ENCODE measurements at regions of chr12 and their contacts with region 1.

Region 1: DNA sequence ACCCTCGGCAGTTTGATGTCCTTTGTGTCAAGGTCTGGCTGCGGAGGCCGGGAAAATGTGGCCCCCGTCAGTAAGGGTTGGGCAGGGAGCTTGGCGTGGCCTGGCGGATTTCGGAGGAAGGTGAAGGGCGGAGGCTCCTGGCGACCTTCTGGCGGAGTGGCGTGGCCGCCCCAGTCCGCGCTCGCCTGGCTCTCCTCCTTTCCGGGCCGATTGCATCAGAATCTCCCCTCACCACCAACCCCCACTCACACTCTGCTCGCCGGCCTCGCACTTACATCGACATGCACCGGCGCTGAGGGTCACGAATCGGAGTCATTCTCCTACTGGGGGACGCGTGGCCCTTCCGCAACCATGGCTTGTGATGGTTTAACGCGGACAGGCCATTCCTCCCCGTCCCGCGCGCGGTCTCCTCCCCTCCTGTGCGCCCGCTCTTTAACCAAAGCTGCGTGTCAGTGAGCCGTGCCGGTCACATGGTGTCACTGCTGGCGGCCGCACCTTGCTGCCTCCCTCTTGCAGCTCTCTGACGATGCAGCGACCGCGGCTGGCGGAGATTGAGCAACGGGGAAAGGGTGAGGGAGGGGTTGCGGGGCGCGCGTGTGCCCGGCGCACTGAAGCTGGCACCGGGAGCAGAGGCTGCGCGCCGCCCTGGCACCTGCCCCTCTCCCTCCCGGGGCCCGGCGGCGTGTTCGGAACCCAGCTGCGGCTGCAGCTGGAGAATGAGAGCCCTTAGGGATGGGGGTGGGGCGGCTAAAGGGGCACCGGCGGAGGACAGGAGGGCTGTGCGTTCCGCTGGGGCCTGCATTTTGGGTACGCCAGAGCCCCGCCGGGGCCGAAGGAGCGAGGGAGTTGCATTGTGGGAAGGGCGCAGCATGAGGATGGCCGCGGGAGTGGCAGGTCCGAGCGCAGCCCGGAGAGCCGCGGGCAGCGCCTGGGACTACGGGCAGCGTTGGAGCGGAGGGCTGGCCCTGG is at the start of gene SLC38A1:
- DNase-seq: peak; percentile 95
- H3K4me3 Mint-ChIP-seq: no peak within 1 kb of the TSS
- H3K27ac Mint-ChIP-seq: no peak within 1 kb of the TSS
- H3K4me1 Mint-ChIP-seq: peaks cover 34% of the 10 kb centered on the region
- H3K27me3 Mint-ChIP-seq: peaks cover 6% of the 10 kb centered on the region

Region 2: DNA sequence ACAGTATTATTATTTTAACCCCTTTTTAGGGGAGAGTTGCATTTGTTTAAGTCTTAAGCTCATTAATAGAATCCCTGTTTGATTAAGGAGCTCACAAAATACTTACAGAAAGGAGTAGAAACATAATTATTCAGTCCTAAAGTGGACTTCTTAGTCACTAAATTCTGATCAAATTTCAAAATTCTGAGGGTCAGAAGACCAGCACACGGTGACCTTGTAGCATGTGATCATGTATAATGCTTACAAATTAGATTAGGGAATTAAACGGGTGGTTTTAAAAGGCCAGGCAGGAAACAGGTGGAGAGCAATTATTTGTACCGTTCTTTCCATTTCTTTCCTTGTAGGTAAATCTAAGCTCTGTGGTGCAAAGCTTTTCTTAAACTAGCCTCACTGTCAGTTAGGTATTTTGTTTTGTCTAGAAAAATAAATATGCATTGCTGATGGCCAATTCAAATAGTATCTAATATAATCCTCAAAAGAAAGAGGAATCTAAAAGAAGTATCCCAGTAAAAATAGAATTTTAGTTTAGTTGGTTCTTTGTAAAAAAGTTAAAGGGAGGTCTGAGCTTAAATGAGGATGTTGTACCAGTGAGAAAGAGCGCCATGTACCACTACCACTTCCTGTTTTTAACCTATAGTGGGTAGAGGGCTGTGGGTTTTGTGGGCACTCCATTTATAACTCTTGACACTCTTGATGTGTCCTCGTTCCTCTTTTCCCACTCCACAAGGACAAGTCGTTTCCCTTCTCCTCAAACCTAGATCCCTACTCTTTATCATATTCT is 51.1 kb before region 1 on chr12:
- CTCF ChIA-PET with region 1: interaction called, 11 read pairs
- DNase-seq: peak; percentile 76
- H3K4me3 Mint-ChIP-seq: peak overlapping the region; percentile 57
- H3K27ac Mint-ChIP-seq: peak overlapping the region; percentile 96
- H3K4me1 Mint-ChIP-seq: peaks cover 97% of the 10 kb centered on the region
- H3K27me3 Mint-ChIP-seq: no peaks in the 10 kb centered on the region

Region 3: GRCh38 chr12:46303039-46303666 is 34.3 kb after region 1 on chr12:
- CTCF ChIA-PET with region 1: interaction called, 12 read pairs
- DNase-seq: peak; percentile 60
- H3K4me3 Mint-ChIP-seq: no peak overlapping the region
- H3K27ac Mint-ChIP-seq: no peak overlapping the region
- H3K4me1 Mint-ChIP-seq: peaks cover 3% of the 10 kb centered on the region
- H3K27me3 Mint-ChIP-seq: peaks cover 8% of the 10 kb centered on the region

Region 4: GRCh38 chr12:47079468-47079980 is 810.6 kb after region 1 on chr12 and contains the starts of genes AMIGO2 and PCED1B:
- CTCF ChIA-PET with region 1: no interaction called
- DNase-seq: peak; percentile 78
- H3K4me3 Mint-ChIP-seq: peak within 1 kb of the TSS; percentile 94
- H3K27ac Mint-ChIP-seq: peak within 1 kb of the TSS; percentile 87
- H3K4me1 Mint-ChIP-seq: peaks cover 71% of the 10 kb centered on the region
- H3K27me3 Mint-ChIP-seq: peaks cover 8% of the 10 kb centered on the region